PC-3 (cell line): ENCODE measurements at regions of chr17 and their contacts with region 1.

Region 1: DNA sequence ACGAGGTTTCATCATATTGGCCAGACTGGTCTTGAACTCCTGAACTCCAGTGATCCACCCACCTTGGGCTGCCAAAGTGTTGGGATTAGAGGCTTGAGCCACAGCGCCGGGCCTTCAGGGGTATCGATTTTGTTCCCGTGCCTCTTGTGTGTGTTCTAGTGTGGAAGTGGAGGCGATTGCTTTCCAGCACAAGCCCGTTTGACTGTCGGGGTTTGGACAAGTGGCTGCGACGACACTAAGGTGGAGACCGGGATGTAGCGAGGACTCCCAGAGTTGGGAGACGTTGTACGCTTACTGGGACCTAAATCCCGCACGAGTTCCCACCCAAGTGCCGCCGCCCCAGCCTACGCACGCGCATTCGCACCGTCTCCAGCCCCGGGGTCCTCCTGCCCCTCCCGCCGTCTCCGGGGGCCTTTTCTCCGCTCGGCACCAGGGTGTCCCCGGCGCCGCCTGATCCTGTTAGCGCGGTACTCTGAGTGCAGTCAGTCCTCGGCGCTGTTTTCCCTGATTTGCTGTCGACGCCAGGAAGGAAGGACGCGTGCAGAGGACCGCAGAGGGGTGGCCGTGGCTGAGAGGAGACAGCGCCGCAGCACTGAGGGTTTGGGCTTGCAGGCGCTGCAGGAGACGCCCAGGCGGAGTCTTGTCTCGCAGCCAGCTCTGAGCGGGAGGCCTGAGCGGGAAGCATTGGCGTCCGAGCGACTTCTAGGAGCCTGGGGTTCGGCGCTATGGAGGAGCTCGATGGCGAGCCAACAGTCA is at the start of gene NUP85:
- DNase-seq: peak; percentile 96
- ATAC-seq: peak; percentile 84
- H3K4me3 ChIP-seq: peak within 1 kb of the TSS; percentile 91
- H3K27ac ChIP-seq: peak within 1 kb of the TSS; percentile 94
- H3K4me1 ChIP-seq: peaks cover 8% of the 10 kb centered on the region; the same call in 1 of the 2 replicates
- H3K27me3 ChIP-seq: no peaks in the 10 kb centered on the region
- CTCF ChIP-seq: no peak
- total RNA-seq, gene NUP85: 91.5 and 95.6 TPM in 2 replicates

Region 2: DNA sequence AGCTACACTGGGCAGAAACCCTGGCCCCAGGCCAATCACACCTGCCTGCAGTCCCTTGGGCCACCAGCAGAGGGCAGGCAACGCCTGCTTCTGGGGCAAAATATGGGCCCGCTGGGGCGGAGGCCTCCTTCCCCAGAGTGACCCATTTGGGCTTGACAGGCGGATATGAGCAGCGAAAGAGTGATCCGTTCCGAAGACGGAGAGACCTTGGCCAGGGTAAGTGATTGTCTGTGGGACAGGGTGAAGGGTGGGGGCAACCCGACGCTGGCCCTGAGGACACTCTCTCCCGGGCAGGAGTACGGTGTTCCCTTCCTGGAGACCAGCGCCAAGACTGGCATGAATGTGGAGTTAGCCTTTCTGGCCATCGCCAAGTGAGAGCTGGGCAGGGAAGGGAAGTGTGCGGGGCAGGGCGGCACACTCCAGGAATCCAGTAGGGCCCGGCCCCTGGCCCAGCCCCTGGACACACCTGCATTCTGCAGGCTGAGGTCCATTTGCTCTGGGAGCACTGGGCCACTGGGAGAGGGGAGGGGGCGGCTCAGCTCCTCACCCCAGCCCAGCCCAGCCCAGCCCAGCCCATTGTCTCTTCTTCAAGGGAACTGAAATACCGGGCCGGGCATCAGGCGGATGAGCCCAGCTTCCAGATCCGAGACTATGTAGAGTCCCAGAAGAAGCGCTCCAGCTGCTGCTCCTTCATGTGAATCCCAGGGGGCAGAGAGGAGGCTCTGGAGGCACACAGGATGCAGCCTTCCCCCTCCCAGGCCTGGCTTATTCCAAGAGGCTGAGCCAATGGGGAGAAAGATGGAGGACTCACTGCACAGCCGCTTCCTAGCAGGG is 460.3 kb before region 1 on chr17:
- CTCF ChIA-PET with region 1: no interaction called
- POLR2A ChIA-PET with region 1: no interaction called
- intact Hi-C with region 1: no loop called
- DNase-seq: peak; percentile 96
- ATAC-seq: peak; percentile 11
- H3K4me3 ChIP-seq: peak overlapping the region; percentile 37; the same call in 1 of the 2 replicates
- H3K27ac ChIP-seq: no peak overlapping the region
- H3K4me1 ChIP-seq: peaks cover 13% of the 10 kb centered on the region
- H3K27me3 ChIP-seq: peaks cover 8% of the 10 kb centered on the region; the same call in 1 of the 2 replicates
- CTCF ChIP-seq: peak; percentile 99

Region 3: DNA sequence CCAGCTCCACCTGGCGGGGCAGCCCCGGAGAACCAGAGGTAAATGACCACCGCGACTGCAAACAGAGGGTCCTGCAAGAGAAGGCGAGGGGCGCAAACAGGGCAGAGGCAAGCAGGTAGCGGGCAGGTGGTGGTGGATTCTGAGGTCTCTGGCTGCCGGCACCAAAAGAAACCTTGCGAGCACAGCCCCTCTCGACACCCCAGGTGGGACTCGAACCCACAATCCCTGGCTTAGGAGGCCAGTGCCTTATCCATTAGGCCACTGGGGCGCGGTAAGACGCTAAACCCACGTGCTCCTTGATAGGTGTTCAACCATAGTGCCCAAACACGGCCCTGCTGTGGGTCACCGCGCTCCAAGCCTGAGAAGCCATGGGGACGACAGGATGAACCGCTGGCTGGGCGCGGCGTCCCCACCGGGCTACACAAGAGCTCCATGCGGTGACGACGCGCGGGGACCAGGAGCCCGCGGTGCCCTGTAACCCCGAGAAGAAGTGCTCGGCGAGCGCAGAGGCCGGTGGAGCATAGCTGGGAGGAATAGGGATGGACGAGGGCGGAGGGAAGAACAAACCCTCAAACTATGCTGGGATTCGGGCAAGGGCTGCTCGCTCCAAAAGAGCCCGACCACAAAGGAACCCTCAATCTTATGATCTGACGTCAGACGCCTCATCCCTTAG is 170.8 kb before region 1 on chr17:
- CTCF ChIA-PET with region 1: interaction called, 14 read pairs
- POLR2A ChIA-PET with region 1: no interaction called
- intact Hi-C with region 1: loop called (anchors 10 kb)
- DNase-seq: peak; percentile 99
- ATAC-seq: peak; percentile 33
- H3K4me3 ChIP-seq: peak overlapping the region; percentile 77
- H3K27ac ChIP-seq: peak overlapping the region; percentile 87
- H3K4me1 ChIP-seq: peaks cover 36% of the 10 kb centered on the region
- H3K27me3 ChIP-seq: no peaks in the 10 kb centered on the region
- CTCF ChIP-seq: peak; percentile 3; the same call in 1 of the 2 replicates

Region 4: DNA sequence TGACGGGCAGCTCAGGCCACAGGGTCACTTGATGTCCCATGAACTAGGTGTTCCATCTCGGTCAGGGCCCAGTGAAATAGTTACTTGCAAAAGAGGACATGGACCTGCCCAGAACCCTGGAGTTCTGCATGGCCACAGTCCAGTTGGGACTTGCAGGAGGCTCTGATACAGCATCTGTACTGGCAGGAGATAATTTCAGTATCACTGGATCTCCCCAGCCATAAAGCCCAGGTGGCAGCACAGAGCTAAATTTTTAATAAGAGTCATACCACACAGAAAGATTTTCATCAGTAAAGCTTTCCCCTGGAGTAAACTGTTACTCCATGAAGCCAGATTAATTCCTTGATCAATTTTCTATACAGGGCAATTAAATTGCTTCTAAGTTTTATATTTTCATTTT is 135.4 kb before region 1 on chr17:
- CTCF ChIA-PET with region 1: interaction called, 14 read pairs
- POLR2A ChIA-PET with region 1: interaction called, 5 read pairs
- intact Hi-C with region 1: loop called (anchors 1 kb)
- DNase-seq: peak; percentile 83
- ATAC-seq: peak; percentile 91
- H3K4me3 ChIP-seq: no peak overlapping the region
- H3K27ac ChIP-seq: no peak overlapping the region
- H3K4me1 ChIP-seq: no peaks in the 10 kb centered on the region
- H3K27me3 ChIP-seq: no peaks in the 10 kb centered on the region
- CTCF ChIP-seq: peak; percentile 86

Region 5: DNA sequence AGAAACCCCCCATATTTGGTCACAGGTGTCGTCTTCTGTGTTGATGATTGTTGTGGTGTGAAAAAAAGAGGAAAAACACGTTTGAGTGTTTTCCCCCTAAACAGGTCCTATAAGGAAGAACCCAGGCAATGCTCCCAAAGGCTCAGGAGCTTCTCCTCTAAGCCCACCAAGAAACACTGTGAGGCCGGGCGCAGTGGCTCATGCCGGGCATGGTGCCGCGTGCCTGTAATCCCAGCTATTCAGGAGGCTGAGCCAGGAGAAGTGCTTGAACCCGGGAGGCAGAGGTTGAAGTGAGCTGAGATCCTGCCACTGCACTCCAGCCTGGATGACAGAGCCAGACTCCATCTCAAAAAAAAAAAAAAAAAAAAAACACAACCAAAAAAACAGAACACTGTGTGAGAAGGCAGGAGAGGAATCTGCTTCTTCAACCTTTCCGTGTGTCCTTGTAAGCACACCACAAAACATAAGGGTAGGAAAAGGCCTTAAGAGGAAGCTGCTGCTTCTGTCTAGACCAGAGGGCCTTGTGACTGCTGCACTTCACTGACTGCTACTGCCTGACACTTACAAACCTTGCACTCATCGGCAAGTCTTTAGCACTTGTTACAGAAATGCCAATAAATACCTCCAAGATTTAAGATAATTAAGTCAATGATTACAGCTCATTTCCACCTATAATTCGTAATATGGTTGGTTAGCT is 60.3 kb before region 1 on chr17:
- CTCF ChIA-PET with region 1: interaction called, 11 read pairs
- POLR2A ChIA-PET with region 1: no interaction called
- intact Hi-C with region 1: no loop called
- DNase-seq: no peak
- ATAC-seq: no peak
- H3K4me3 ChIP-seq: no peak overlapping the region
- H3K27ac ChIP-seq: no peak overlapping the region
- H3K4me1 ChIP-seq: peaks cover 4% of the 10 kb centered on the region; the same call in 1 of the 2 replicates
- H3K27me3 ChIP-seq: no peaks in the 10 kb centered on the region
- CTCF ChIP-seq: no peak

Region 6: DNA sequence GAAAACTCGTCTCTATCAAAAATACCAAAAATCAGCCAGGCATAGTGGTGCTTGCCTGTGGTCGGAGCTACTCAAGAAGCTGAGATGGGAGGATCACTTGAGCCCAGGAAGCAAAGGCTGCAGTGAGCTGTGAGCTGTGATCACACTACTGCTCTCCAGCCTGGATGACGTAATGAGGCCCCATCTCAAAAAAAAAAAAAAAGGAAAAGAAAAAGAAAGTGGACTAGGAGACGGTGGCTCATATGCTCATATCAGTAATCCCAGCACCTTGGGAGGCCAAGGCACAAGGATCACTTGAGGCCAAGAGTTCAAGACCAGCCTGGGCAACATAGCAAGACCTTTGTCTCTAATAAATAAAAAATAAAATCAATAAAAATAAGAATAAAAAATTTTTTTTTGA is 13.6 kb before region 1 on chr17:
- CTCF ChIA-PET with region 1: interaction called, 13 read pairs
- POLR2A ChIA-PET with region 1: no interaction called
- intact Hi-C with region 1: no loop called
- DNase-seq: no peak
- ATAC-seq: no peak
- H3K4me3 ChIP-seq: no peak overlapping the region
- H3K27ac ChIP-seq: no peak overlapping the region
- H3K4me1 ChIP-seq: peaks cover 5% of the 10 kb centered on the region; the same call in 1 of the 2 replicates
- H3K27me3 ChIP-seq: no peaks in the 10 kb centered on the region
- CTCF ChIP-seq: no peak

Region 7: DNA sequence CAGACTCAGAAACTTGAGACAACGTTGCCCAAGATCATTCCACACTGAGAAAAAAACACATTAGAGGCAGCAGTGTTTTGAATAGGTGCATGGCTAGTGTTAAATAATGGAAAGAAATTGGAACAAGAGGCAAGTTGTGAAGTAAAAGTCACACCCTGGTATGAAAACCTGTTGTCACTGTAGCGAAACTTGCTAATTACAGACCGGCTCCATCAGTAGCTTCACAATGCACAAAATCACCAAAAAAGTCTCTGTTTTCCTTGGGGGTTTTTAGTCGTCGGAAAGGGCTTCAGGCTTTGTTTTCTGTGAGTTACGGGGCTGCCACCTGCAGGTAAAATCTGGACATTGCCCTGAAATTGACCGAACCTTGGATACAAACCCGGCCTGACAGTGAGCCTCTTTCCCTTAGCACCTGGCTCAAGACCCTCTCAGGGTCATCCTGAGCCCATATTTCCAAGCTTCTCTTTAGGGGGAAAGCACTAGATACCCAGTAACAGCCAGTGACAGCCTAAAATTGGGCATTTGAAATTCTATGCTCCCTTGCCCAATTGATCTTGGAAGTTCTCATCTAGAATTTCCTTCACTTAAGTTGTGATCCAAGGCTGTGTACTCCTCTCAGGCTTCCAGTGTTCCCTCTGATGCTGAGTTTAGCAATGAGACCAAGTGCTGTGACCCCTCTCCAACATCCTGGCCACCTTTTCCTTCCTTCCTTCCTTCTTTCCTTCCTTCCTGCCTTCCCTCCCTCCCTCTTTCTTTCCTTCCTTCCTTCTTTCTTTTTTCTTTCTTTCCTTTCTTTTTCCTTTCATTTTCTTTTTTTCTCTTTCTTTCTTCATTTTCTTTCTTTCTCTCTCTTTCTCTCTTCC is 207.5 kb after region 1 on chr17:
- CTCF ChIA-PET with region 1: interaction called, 3 read pairs
- POLR2A ChIA-PET with region 1: no interaction called
- intact Hi-C with region 1: loop called (anchors 10 kb)
- DNase-seq: peak; percentile 88
- ATAC-seq: peak; percentile 84
- H3K4me3 ChIP-seq: peak overlapping the region; percentile 42
- H3K27ac ChIP-seq: no peak overlapping the region
- H3K4me1 ChIP-seq: 0 out of 2 replicates have a peak, but pooled peaks cover 3% of the 10 kb centered on the region
- H3K27me3 ChIP-seq: no peaks in the 10 kb centered on the region
- CTCF ChIP-seq: peak; percentile 91